BJ (cell line): ENCODE measurements at regions of chr17 and their contacts with region 1.

Region 1: GRCh38 chr17:16915752-16916556 is 56.0 kb downstream of the TNFRSF13B start:
- DNase-seq: no peak
- H3K4me3 ChIP-seq: no peak overlapping the region
- H3K27me3 ChIP-seq: peaks cover 7% of the 10 kb centered on the region
- CTCF ChIP-seq: peak; percentile 70

Region 2: DNA sequence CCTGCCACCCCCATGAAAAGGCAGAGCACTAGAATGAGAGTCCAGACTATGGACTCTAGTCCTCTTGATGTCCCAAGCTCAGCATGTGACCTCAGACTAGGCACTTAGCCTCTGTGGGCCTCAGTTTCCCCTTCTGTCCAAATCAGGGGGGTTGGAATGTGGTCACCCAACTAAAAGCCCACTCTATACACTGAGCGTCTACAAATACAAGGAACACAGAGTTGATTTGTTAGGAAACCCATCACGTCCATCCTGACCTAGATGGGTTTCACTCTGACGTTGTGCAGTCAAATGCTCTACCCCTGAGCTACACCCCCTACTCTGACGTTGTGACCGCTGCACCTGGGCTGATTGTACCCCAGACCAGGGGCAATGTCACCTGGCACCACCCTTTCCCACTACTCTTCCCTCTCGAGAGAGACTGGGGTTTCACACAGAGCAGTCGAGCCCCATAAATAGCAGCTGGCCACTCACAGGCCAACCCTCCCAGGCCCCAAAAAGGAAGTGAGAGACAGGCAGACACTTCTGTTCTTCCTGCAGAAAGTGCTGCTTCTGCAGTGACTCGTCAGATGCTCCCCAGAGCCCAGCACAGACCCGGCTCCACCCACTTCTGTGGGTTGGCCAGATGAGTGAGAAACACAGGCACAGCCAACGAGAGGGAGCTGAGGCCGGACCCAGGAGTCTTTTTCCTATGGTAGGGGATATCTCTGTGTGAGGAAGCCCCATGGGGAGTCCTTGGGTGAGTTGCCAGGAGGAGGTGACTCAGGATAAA is 72.1 kb after region 1 on chr17:
- CTCF ChIA-PET with region 1: interaction called, 52 read pairs
- POLR2A ChIA-PET with region 1: no interaction called
- DNase-seq: peak; percentile 41
- H3K4me3 ChIP-seq: no peak overlapping the region
- H3K27me3 ChIP-seq: no peaks in the 10 kb centered on the region
- CTCF ChIP-seq: no peak